WTC11 (cell line): ENCODE measurements at regions of chr14 and their contacts with region 1.

Region 1: GRCh38 chr14:67571272-67571850 is 28.7 kb downstream of the PIGH start:
- DNase-seq: peak; percentile 72
- ATAC-seq: peak; percentile 85
- H3K4me3 Mint-ChIP-seq: no peak overlapping the region
- H3K27ac Mint-ChIP-seq: no peak overlapping the region
- H3K4me1 Mint-ChIP-seq: peaks cover 9% of the 10 kb centered on the region
- H3K27me3 Mint-ChIP-seq: no peaks in the 10 kb centered on the region
- CTCF ChIP-seq: peak; percentile 85

Region 2: GRCh38 chr14:67411820-67412421 is 159.4 kb before region 1 on chr14 and contains the start of gene PLEK2:
- CTCF ChIA-PET with region 1: interaction called, 10 read pairs
- POLR2A ChIA-PET with region 1: no interaction called
- DNase-seq: peak; percentile 42
- ATAC-seq: peak; percentile 74
- H3K4me3 Mint-ChIP-seq: peak within 1 kb of the TSS; percentile 70
- H3K27ac Mint-ChIP-seq: no peak within 1 kb of the TSS
- H3K4me1 Mint-ChIP-seq: peaks cover 10% of the 10 kb centered on the region
- H3K27me3 Mint-ChIP-seq: peaks cover 41% of the 10 kb centered on the region
- CTCF ChIP-seq: no peak
- total RNA-seq, gene PLEK2: 1.2 to 1.4 TPM (median 1.3 TPM) in 3 replicates

Region 3: DNA sequence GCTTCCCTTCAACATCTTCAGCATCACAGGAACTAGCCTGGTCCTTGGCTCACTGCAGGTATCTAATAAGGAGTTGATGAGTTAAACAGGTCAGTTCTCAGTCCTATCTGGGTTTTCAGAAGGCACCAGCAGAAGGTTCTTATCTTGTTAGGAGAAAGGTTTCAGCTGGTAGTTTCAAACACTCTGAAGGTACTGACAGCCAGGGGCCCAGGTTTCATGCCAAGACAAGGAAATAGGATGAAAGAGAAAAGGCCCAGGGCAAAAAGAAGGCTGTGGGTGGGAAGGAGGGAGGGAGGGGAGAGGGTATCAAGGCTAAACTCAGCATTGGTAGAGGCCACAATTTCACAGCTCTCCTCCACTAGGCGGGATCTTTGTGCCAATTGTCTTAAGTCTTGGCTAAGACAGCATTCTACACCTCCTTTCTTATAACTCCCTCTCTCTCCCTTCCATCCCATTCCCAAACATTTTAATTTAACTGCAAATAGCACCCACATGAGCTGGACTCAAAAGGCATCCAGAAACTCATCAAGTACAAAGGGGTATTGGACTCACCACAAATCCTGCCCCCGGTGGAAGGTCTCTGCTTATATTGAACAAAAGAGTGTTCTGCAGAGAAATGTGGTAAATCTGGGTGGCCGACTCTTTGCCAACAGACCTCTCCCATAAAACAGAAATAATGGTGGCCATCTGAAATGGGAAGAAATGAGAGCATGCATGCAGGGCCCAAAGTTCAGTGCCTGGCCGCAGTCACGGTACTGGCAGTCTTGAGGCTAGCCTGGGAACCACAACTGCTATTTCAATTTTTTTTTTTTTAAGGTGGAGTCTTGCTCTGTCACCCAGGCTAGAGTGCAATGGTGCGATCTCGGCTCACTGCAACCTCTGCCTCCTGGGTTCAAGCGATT is 103.9 kb before region 1 on chr14:
- CTCF ChIA-PET with region 1: interaction called, 10 read pairs
- POLR2A ChIA-PET with region 1: no interaction called
- DNase-seq: no peak
- ATAC-seq: peak; percentile 44; the same call in 1 of the 2 replicates
- H3K4me3 Mint-ChIP-seq: no peak overlapping the region
- H3K27ac Mint-ChIP-seq: no peak overlapping the region
- H3K4me1 Mint-ChIP-seq: no peaks in the 10 kb centered on the region
- H3K27me3 Mint-ChIP-seq: no peaks in the 10 kb centered on the region; the same call in 1 of the 2 replicates
- CTCF ChIP-seq: no peak

Region 4: DNA sequence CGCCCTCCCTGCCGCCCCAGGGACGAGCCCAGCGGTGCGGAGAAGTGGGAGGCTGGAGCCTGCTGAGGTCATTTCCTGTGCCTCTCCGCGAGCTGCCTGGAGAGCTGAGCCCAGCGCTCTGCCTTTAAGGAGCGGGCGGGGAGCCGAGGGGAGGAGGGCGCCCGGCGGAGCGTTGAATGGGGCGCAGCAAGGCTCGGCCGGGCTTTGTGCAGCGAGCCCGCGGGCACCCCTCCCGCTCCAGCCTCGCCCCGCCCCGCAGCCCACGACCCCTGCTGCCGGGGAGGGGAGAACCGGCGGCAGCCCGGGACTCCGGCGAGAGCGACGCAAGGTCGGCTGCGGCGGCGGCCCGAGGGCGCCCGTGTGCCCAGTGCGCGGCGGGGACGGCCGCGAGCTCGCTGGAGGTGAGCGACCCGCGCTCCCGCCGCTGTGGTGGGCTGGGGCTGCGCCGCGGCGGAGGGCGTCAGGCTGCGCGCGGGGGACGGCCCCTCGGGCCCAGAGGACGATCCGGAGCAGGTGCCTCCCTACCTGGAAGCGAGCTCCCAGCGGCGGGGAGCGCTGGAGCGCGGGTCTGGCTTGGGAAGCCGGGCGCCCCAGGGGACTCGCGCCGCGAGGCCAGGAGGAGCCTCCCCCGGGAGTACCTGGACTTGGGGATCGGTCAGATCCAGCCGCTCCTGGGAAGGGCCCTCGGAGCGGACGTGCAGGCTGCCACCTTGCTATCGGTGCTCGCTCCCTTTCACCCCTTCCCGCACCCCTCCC is 38.2 kb before region 1 on chr14 and contains the start of gene PLEKHH1:
- CTCF ChIA-PET with region 1: interaction called, 173 read pairs
- POLR2A ChIA-PET with region 1: no interaction called
- DNase-seq: peak; percentile 75
- ATAC-seq: peak; percentile 88
- H3K4me3 Mint-ChIP-seq: peak within 1 kb of the TSS; percentile 86
- H3K27ac Mint-ChIP-seq: peak within 1 kb of the TSS; percentile 89
- H3K4me1 Mint-ChIP-seq: peaks cover 34% of the 10 kb centered on the region
- H3K27me3 Mint-ChIP-seq: peaks cover 2% of the 10 kb centered on the region; the same call in 1 of the 2 replicates
- CTCF ChIP-seq: no peak
- total RNA-seq, gene PLEKHH1: 45.4 to 49.8 TPM (median 48.3 TPM) in 3 replicates

Region 5: GRCh38 chr14:67549734-67550133 is 21.6 kb before region 1 on chr14:
- CTCF ChIA-PET with region 1: interaction called, 14 read pairs
- POLR2A ChIA-PET with region 1: no interaction called
- DNase-seq: no peak
- ATAC-seq: no peak
- H3K4me3 Mint-ChIP-seq: no peak overlapping the region
- H3K27ac Mint-ChIP-seq: peak overlapping the region; percentile 88
- H3K4me1 Mint-ChIP-seq: peaks cover 2% of the 10 kb centered on the region; the same call in 1 of the 2 replicates
- H3K27me3 Mint-ChIP-seq: no peaks in the 10 kb centered on the region
- CTCF ChIP-seq: no peak

Region 6: DNA sequence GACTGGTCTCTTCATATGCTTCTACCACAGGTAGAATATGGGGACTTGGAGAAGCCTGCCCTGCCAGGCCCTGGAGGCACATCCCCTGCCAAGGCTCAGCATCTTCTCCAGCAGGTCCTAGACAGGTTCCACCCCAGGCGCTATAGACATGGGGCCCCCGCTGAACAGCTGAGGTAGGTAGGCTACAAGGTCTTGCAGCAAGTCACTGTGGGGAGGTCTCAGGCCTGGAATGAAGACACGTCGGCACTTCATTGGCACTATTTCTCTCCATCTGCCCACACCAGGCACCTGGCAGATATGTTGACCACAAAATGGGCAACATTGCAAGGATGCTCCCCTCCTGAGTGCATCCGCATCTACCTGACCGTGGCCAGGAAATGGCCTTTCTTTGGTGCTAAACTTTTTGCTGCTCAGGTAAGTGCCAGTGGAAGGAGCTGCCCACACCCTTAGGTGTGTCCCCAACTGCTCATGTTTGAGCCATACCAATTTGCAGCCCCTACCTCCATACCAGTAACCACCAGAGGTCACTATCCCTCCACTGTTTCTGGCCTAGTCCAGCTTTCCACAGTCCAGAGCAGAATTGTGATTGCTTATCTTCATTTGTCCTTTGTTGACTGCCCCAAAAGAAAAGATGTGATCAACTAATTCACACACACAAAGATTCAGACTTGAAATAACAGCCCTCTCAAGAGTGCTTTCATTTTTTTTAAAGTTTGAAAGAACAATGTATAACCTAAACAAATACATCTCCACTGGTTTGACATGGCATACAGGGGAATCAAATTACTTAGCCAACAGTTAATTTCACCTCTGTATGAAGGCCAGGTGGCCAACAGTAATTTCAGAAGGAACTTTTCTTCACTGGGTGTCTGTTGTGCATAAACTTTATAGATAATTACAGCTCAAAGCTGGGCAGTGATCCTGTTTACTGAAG is 12.6 kb after region 1 on chr14:
- CTCF ChIA-PET with region 1: interaction called, 20 read pairs
- POLR2A ChIA-PET with region 1: no interaction called
- DNase-seq: peak; percentile 29
- ATAC-seq: peak; percentile 92
- H3K4me3 Mint-ChIP-seq: no peak overlapping the region
- H3K27ac Mint-ChIP-seq: no peak overlapping the region
- H3K4me1 Mint-ChIP-seq: no peaks in the 10 kb centered on the region
- H3K27me3 Mint-ChIP-seq: no peaks in the 10 kb centered on the region
- CTCF ChIP-seq: peak; percentile 36; the same call in 1 of the 2 replicates

Region 7: GRCh38 chr14:67619446-67620216 is 48.3 kb after region 1 on chr14 and contains the start of gene ARG2:
- CTCF ChIA-PET with region 1: interaction called, 11 read pairs
- POLR2A ChIA-PET with region 1: no interaction called
- DNase-seq: peak; percentile 100
- ATAC-seq: peak; percentile 91
- H3K4me3 Mint-ChIP-seq: peak within 1 kb of the TSS; percentile 92
- H3K27ac Mint-ChIP-seq: peak within 1 kb of the TSS; percentile 92
- H3K4me1 Mint-ChIP-seq: peaks cover 35% of the 10 kb centered on the region
- H3K27me3 Mint-ChIP-seq: peaks cover 46% of the 10 kb centered on the region
- CTCF ChIP-seq: no peak
- total RNA-seq, gene ARG2: 29.8 to 38.5 TPM (median 33.0 TPM) in 3 replicates